CD8-positive, alpha-beta memory T cell (primary cell): ENCODE measurements at regions of chr20 and their contacts with region 1.

Region 1: GRCh38 chr20:62907384-62908317 is 18.7 kb downstream of the DIDO1 start:
- DNase-seq: peak in 2 of 5 donors; percentile 52 to 59
- H3K4me3 ChIP-seq: no peak overlapping the region
- H3K4me3 Mint-ChIP-seq: no peak overlapping the region
- H3K27ac ChIP-seq: no peak overlapping the region
- H3K27ac Mint-ChIP-seq: peak overlapping the region in 5 of 8 donors; percentile 34 to 74 (median 63)
- H3K4me1 ChIP-seq: peaks cover 5% of the 10 kb centered on the region
- H3K4me1 Mint-ChIP-seq: peaks cover 19 to 46% (median 36%) of the 10 kb centered on the region in 3 donors
- H3K27me3 ChIP-seq: no peaks in the 10 kb centered on the region
- H3K27me3 Mint-ChIP-seq: peaks cover 0 to 2% of the 10 kb centered on the region in 2 donors

Region 2: DNA sequence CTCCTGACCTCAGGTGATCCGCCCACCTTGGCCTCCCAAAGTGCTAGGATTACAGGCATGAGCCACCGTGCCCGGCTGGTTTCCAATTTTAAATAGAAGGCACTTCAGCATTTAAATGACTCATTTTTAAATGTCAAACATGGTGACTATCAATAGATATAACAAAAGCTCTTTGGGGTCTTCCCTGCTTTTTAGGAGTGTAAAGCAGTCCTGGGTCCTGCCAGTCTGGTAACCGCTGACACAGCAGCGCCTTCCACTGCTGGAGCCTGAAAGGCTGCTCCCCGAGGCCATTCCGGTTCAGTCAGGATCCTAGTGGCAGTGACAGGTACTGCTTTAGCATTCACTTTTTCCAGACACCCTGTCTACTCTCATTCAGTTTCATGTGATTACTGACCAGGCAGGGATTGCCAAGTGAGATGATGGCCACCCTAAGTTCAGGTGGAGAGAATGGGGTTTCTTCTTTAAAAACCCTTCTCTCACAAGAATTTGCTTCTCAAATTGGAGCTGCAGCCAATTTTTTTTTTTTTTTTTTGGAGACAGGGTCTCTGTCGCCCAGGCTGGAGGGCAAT is 13.6 kb after region 1 on chr20:
- CTCF ChIA-PET with region 1: interaction called, 62 read pairs
- POLR2A ChIA-PET with region 1: interaction called, 8 read pairs
- DNase-seq: peak; percentile 58 to 74 (median 63)
- H3K4me3 ChIP-seq: no peak overlapping the region
- H3K4me3 Mint-ChIP-seq: peak overlapping the region; percentile 73 to 90 (median 82)
- H3K27ac ChIP-seq: no peak overlapping the region
- H3K27ac Mint-ChIP-seq: peak overlapping the region; percentile 85 to 95 (median 93)
- H3K4me1 ChIP-seq: peaks cover 85% of the 10 kb centered on the region
- H3K4me1 Mint-ChIP-seq: peaks cover 76 to 90% (median 89%) of the 10 kb centered on the region in 3 donors
- H3K27me3 ChIP-seq: no peaks in the 10 kb centered on the region
- H3K27me3 Mint-ChIP-seq: peaks cover 0 to 3% of the 10 kb centered on the region in 2 donors